Activated CD4-positive, alpha-beta memory T cell treated with anti-CD3 and anti-CD28 coated beads, Interleukin-2, amount 10 ng/mL, durations not matched to agents 7 days and 5 days (primary cell): ENCODE measurements at regions of chr19 and their contacts with region 1.

Region 1: GRCh38 chr19:3762501-3763459 is at the start of gene MRPL54:
- DNase-seq: peak; percentile 100
- H3K4me3 Mint-ChIP-seq: peak within 1 kb of the TSS; percentile 90
- H3K27ac Mint-ChIP-seq: peak within 1 kb of the TSS; percentile 98
- H3K4me1 Mint-ChIP-seq: peaks cover 45% of the 10 kb centered on the region
- H3K27me3 Mint-ChIP-seq: no peaks in the 10 kb centered on the region
- total RNA-seq, gene MRPL54: 71.5 to 75.8 TPM

Region 2: GRCh38 chr19:3748965-3749364 is 13.8 kb before region 1 on chr19:
- CTCF ChIA-PET with region 1: interaction called, 3 read pairs
- POLR2A ChIA-PET with region 1: interaction called, 14 read pairs
- DNase-seq: no peak
- H3K4me3 Mint-ChIP-seq: no peak overlapping the region
- H3K27ac Mint-ChIP-seq: no peak overlapping the region
- H3K4me1 Mint-ChIP-seq: no peaks in the 10 kb centered on the region
- H3K27me3 Mint-ChIP-seq: no peaks in the 10 kb centered on the region

Region 3: DNA sequence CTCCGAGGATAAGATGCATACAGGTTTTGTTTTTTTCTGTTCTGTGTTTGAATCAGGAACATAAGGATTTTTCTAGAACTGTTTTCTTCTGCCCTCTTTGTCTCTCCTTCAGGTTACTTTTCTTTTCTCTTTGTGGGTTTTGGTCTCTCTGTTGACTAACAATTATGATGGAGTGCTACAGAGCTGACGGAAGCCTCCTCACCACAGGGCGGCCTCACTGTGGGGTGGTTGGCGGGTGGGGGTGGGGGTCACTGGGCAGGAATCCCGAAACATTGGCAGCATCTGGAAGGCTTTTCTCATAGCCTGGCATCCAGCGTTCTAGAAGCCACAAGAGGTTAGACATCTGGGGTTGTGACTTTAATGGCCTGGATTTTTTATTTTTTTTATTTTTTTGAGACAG is 35.4 kb after region 1 on chr19:
- CTCF ChIA-PET with region 1: interaction called, 4 read pairs
- POLR2A ChIA-PET with region 1: interaction called, 13 read pairs
- DNase-seq: peak; percentile 66
- H3K4me3 Mint-ChIP-seq: peak overlapping the region; percentile 28
- H3K27ac Mint-ChIP-seq: peak overlapping the region; percentile 68
- H3K4me1 Mint-ChIP-seq: peaks cover 21% of the 10 kb centered on the region
- H3K27me3 Mint-ChIP-seq: peaks cover 6% of the 10 kb centered on the region

Region 4: GRCh38 chr19:3809881-3810707 is 47.3 kb after region 1 on chr19:
- CTCF ChIA-PET with region 1: interaction called, 21 read pairs
- POLR2A ChIA-PET with region 1: interaction called, 53 read pairs
- DNase-seq: no peak
- H3K4me3 Mint-ChIP-seq: no peak overlapping the region
- H3K27ac Mint-ChIP-seq: no peak overlapping the region
- H3K4me1 Mint-ChIP-seq: peaks cover 48% of the 10 kb centered on the region
- H3K27me3 Mint-ChIP-seq: no peaks in the 10 kb centered on the region

Region 5: GRCh38 chr19:3830621-3831589 is 68.1 kb after region 1 on chr19:
- CTCF ChIA-PET with region 1: no interaction called
- POLR2A ChIA-PET with region 1: no interaction called
- DNase-seq: no peak
- H3K4me3 Mint-ChIP-seq: no peak overlapping the region
- H3K27ac Mint-ChIP-seq: no peak overlapping the region
- H3K4me1 Mint-ChIP-seq: peaks cover 7% of the 10 kb centered on the region
- H3K27me3 Mint-ChIP-seq: no peaks in the 10 kb centered on the region